Activated naive CD4-positive, alpha-beta T cell treated with anti-CD3 and anti-CD28 coated beads for 36 hours (primary cell): ENCODE measurements at regions of chr1 and their contacts with region 1.

Region 1: GRCh38 chr1:172338295-172338735 is 82.2 kb upstream of the C1orf105 start:
- DNase-seq: peak; percentile 89
- H3K4me3 Mint-ChIP-seq: no peak overlapping the region
- H3K27ac Mint-ChIP-seq: peak overlapping the region; percentile 67
- H3K4me1 Mint-ChIP-seq: peaks cover 49% of the 10 kb centered on the region
- H3K27me3 Mint-ChIP-seq: no peaks in the 10 kb centered on the region

Region 2: GRCh38 chr1:172089768-172090510 is 248.4 kb before region 1 on chr1:
- CTCF ChIA-PET with region 1: no interaction called
- intact Hi-C with region 1: loop called (anchors 1 kb)
- DNase-seq: peak; percentile 83
- H3K4me3 Mint-ChIP-seq: no peak overlapping the region
- H3K27ac Mint-ChIP-seq: no peak overlapping the region
- H3K4me1 Mint-ChIP-seq: peaks cover 2% of the 10 kb centered on the region
- H3K27me3 Mint-ChIP-seq: no peaks in the 10 kb centered on the region

Region 3: GRCh38 chr1:172180501-172181285 is 157.6 kb before region 1 on chr1:
- CTCF ChIA-PET with region 1: interaction called, 3 read pairs
- intact Hi-C with region 1: loop called (anchors 1 kb)
- DNase-seq: peak; percentile 63
- H3K4me3 Mint-ChIP-seq: peak overlapping the region; percentile 67
- H3K27ac Mint-ChIP-seq: peak overlapping the region; percentile 89
- H3K4me1 Mint-ChIP-seq: peaks cover 40% of the 10 kb centered on the region
- H3K27me3 Mint-ChIP-seq: no peaks in the 10 kb centered on the region

Region 4: DNA sequence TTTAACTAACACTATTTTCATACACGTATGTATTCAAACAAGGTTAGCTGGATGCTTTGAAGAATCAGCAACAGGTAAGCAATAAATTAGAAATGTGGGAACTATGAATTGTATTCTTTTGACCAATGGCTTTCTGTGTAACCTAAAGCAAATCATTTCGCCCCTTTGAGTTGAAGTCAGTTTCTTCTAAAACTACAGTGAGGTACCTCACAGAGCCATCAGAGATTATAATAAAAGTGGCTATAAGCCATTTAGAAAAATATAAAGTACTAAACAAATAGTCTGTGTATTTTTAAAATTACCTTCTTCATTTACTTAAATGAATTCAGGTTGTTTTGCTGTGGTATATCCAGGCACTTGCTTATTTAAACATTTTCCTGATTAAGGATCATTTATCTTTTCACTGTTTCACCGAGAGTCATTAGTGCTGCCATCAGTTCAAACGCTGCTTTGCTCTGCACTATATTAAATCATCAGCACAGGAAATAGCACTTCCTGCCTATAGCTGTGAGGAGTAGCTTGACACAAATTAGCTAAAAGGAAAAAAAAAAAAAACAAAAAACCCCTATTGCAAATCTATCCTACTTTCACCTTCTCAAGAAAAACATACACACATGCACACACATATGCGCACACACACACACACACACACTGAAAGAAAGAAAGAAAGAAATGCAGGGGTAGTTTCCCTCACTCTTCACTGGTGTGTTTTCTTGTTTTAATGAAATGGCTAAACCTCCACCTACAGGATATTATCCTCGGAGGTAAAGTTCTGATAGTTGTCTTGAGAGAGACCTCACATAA is 42.3 kb after region 1 on chr1:
- CTCF ChIA-PET with region 1: interaction called, 3 read pairs
- intact Hi-C with region 1: loop called (anchors 1 kb)
- DNase-seq: peak; percentile 68
- H3K4me3 Mint-ChIP-seq: peak overlapping the region; percentile 67
- H3K27ac Mint-ChIP-seq: peak overlapping the region; percentile 86
- H3K4me1 Mint-ChIP-seq: peaks cover 31% of the 10 kb centered on the region
- H3K27me3 Mint-ChIP-seq: no peaks in the 10 kb centered on the region

Region 5: GRCh38 chr1:172638885-172639831 is 300.8 kb after region 1 on chr1:
- CTCF ChIA-PET with region 1: no interaction called
- intact Hi-C with region 1: loop called (anchors 1 kb)
- DNase-seq: peak; percentile 90
- H3K4me3 Mint-ChIP-seq: peak overlapping the region; percentile 42
- H3K27ac Mint-ChIP-seq: peak overlapping the region; percentile 93
- H3K4me1 Mint-ChIP-seq: peaks cover 73% of the 10 kb centered on the region
- H3K27me3 Mint-ChIP-seq: peaks cover 9% of the 10 kb centered on the region

Region 6: GRCh38 chr1:172837816-172838680 is 499.7 kb after region 1 on chr1:
- CTCF ChIA-PET with region 1: no interaction called
- intact Hi-C with region 1: loop called (anchors 1 kb)
- DNase-seq: peak; percentile 46
- H3K4me3 Mint-ChIP-seq: no peak overlapping the region
- H3K27ac Mint-ChIP-seq: no peak overlapping the region
- H3K4me1 Mint-ChIP-seq: peaks cover 19% of the 10 kb centered on the region
- H3K27me3 Mint-ChIP-seq: peaks cover 25% of the 10 kb centered on the region